ENCODE measurements at regions of chr16 and their contacts with region 1.

Region 1: DNA sequence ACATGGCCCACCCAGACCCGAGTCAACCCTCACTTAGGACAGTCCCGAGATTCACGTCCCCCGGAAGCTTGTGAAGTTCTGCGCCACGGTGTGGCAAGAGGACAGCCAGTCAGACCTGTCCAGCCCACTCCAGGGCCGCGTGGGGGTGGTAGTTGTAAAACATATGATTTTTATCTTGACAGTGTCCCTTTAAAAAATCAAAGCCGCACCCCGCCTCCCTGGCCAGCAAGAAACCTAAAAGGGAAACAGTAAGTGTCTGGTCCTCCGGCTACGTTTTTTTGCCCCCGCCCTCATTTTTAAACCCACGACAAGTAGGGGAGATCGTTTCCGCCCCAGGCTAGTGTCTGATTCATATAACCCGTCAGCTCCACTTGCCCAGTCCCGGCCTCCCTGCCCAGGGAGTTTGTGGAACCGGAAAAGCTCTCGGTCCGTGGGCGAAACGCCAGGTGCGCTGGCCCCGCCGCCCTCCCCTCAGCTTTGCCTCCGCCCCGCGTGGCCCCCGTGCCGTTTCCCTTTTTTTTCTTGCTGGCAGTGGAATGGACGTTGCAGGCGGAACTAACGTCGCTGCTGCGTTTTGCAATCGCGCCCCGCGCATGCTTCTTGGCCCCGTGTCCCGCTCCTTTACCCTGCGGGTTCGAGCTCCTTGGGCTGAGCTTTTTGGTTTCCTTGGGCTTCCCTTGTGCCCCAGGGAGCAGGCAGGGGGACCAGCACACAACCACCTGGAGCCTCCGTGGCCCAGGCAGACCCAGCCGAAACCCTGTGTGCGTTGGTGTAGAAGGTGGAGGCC is 13.3 kb upstream of the NUDT16L1 start:
- DNase-seq: peak; percentile 17
- H3K4me3 Mint-ChIP-seq: no peak overlapping the region
- H3K27ac Mint-ChIP-seq: no peak overlapping the region
- H3K4me1 Mint-ChIP-seq: peaks cover 24% of the 10 kb centered on the region
- H3K27me3 Mint-ChIP-seq: no peaks in the 10 kb centered on the region

Region 2: GRCh38 chr16:4435337-4436067 is 244.5 kb before region 1 on chr16:
- CTCF ChIA-PET with region 1: no interaction called
- POLR2A ChIA-PET with region 1: no interaction called
- intact Hi-C with region 1: no loop called
- DNase-seq: no peak
- H3K4me3 Mint-ChIP-seq: no peak overlapping the region
- H3K27ac Mint-ChIP-seq: no peak overlapping the region
- H3K4me1 Mint-ChIP-seq: peaks cover 6% of the 10 kb centered on the region
- H3K27me3 Mint-ChIP-seq: no peaks in the 10 kb centered on the region

Region 3: DNA sequence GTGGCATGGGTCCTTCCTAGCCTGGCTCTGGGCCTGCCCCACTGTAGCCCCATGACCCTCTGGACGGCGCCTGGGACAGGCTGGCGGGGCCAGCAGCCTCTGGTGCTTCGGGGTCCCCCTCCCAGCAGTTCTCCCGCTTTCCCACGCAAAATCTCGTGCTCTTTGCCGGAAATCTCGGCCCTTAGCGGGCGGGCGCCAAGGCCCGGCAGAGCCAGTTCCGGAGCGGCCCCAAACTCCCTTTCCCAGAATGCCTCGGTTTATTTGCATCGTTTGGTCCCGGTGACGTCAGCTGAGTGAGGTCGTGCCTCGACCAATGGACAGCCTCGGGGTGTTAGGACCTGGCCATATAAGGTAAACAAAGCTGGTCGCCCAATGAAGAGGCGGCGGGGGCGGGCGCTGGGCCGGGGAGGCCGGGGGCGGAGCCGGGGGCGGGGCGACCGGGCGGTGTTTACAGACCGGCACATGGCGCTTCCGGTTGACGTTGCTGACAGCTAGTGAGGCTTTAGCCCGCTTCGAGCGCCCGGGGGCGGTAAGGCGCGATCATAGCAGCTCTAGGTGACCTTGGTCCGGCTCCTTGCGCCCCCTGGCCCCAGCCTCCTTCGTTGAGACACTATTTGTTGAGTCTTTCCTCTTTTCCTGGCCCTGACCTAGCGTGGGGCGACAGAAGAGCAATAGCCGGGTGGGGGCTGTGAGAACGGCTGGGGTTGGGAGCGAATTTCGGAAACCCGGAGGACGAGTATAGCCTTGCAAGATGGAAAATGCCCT is 63.8 kb before region 1 on chr16:
- CTCF ChIA-PET with region 1: no interaction called
- POLR2A ChIA-PET with region 1: no interaction called
- intact Hi-C with region 1: loop called (anchors 5 kb)
- DNase-seq: peak; percentile 100
- H3K4me3 Mint-ChIP-seq: peak overlapping the region; percentile 88
- H3K27ac Mint-ChIP-seq: peak overlapping the region; percentile 95
- H3K4me1 Mint-ChIP-seq: peaks cover 23% of the 10 kb centered on the region
- H3K27me3 Mint-ChIP-seq: no peaks in the 10 kb centered on the region

Region 4: GRCh38 chr16:4649744-4650442 is 30.1 kb before region 1 on chr16:
- CTCF ChIA-PET with region 1: interaction called, 11 read pairs
- POLR2A ChIA-PET with region 1: no interaction called
- intact Hi-C with region 1: no loop called
- DNase-seq: no peak
- H3K4me3 Mint-ChIP-seq: no peak overlapping the region
- H3K27ac Mint-ChIP-seq: no peak overlapping the region
- H3K4me1 Mint-ChIP-seq: peaks cover 30% of the 10 kb centered on the region
- H3K27me3 Mint-ChIP-seq: no peaks in the 10 kb centered on the region

Region 5: GRCh38 chr16:4660454-4661007 is 19.5 kb before region 1 on chr16:
- CTCF ChIA-PET with region 1: interaction called, 4 read pairs
- POLR2A ChIA-PET with region 1: no interaction called
- intact Hi-C with region 1: loop called (anchors 2 kb)
- DNase-seq: peak; percentile 88
- H3K4me3 Mint-ChIP-seq: no peak overlapping the region
- H3K27ac Mint-ChIP-seq: peak overlapping the region; percentile 69
- H3K4me1 Mint-ChIP-seq: peaks cover 43% of the 10 kb centered on the region
- H3K27me3 Mint-ChIP-seq: no peaks in the 10 kb centered on the region

Measured in activated CD4-positive, alpha-beta memory T cell treated with anti-CD3 and anti-CD28 coated beads for 36 hours (primary cell).